Dendritic cell treated with granulocyte-macrophage colony-stimulating factor and Interleukin-4, amounts not matched to agents 40 ng/mL and 50 ng/mL, for 4 days (primary cell): ENCODE measurements at regions of chr7 and their contacts with region 1.

Region 1: GRCh38 chr7:22732556-22733126 is 5.6 kb downstream of the IL6 start:
- H3K4me3 Mint-ChIP-seq: no peak overlapping the region
- H3K27ac Mint-ChIP-seq: no peak overlapping the region
- H3K4me1 Mint-ChIP-seq: peaks cover 9% of the 10 kb centered on the region
- H3K27me3 Mint-ChIP-seq: peaks cover 17% of the 10 kb centered on the region

Region 2: GRCh38 chr7:22776964-22777363 is 44.3 kb after region 1 on chr7:
- intact Hi-C with region 1: loop called (anchors 5 kb)
- H3K4me3 Mint-ChIP-seq: no peak overlapping the region
- H3K27ac Mint-ChIP-seq: no peak overlapping the region
- H3K4me1 Mint-ChIP-seq: no peaks in the 10 kb centered on the region
- H3K27me3 Mint-ChIP-seq: peaks cover 4% of the 10 kb centered on the region

Region 3: DNA sequence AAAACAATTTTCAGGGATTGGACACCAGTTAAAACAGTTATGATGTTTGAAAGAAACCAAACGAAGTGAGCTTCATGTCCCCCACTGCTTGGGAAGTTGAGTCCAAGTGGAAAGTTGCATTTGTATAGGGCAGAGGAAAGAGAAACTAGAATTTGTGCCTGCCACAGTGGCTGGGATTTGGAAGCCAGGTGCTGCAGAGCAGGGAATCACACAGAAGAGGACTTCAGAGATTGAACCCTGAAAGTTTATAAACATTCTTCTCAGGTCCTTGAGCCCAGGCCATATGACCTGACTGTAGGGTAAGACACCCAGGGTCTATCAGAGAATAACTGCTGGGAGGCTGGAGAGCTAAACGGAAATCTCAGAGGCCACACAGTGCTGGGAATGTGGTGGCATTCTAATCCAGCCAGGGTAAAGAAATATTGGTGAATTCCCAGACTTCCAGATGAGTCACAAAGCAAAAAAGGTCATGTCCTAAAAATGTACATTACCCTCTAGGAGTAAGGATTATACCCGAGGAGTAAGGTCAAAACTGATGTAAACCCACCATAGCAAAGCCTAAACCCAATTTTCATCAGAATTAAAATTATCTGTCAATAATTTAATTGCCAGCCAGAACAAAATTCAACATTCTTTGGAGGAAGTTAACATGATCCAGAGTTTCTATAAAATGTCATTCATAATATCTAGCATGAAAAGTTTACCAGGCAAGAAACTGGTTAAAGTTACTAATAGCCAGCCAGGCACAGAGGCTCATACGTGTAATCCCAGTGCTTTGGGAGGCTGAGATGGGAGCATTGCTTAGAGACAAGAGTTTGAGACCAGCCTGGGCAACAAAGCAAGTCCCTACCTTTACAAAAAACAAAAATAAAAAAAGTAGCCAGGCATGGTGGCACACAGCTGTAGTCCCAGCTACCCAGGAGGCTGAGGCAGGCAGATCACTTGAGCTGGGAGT is 58.8 kb after region 1 on chr7:
- intact Hi-C with region 1: no loop called
- H3K4me3 Mint-ChIP-seq: no peak overlapping the region
- H3K27ac Mint-ChIP-seq: no peak overlapping the region
- H3K4me1 Mint-ChIP-seq: no peaks in the 10 kb centered on the region
- H3K27me3 Mint-ChIP-seq: no peaks in the 10 kb centered on the region